Sciatic nerve (tissue), 2 donors: ENCODE measurements at regions of chr20 and their contacts with region 1.

Region 1: GRCh38 chr20:60281295-60281694 is 323.1 kb downstream of the CDH26 start:
- DNase-seq: no peak
- ATAC-seq: no peak

Region 2: DNA sequence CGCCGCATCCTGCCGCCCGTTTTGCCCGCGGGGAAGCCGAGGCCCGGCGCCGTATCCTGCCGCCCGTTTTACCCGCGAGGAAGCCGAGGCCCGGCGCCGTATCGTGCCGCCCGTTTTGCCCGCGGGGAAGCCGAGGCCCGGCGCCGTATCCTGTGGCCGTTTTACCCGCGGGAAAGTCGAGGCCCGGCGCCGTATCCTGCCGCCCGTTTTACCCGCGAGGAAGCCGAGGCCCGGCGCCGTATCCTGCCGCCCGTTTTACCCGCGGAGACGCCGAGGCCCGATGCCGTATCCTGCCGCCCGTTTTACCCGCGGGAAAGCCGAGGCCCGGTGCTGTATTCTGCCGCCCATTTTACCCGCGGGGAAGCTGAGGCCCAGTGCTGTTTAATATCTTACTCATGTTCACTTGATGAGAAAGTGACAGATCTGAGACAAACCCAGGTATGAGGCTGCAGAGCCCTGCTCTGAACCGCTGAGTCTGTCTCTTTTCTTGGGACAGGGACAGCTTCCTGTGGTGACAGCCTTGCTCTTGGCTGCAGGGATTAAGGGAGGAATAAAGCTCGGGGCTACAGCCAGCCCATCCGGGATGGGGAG is 193.6 kb before region 1 on chr20:
- intact Hi-C with region 1: no loop called
- DNase-seq: no peak
- ATAC-seq: no peak

Region 3: GRCh38 chr20:60210779-60211617 is 70.3 kb before region 1 on chr20:
- intact Hi-C with region 1: no loop called
- DNase-seq: peak; percentile 87
- ATAC-seq: peak; percentile 94

Region 4: DNA sequence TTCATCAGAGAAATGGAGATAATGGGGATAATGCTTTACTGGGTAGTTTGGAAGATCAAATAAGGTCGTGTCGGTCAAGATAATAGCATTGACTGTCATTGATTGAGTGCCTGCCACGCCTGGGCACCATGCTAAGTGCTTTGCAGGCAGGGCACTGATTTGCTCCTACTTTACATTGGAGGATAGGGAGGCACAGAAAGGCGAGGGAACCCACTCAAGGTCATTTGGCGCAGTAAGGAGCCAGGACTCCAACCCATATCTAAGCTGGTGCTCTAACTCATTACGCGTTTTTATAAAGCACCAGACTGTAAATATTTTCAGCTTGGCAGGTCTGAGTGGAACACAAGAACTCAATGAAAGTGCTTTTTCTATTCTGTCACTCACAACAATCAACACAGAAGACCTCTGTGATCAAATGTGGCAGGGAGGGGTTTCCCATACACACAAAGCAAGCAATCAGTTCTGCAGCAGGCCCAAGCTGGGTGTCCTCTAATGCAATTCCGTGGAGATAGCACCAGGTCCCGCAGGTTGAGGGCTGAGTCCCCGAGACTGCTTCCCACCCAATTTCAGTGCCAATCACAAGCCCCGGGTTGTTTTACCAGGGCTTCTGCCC is 50.5 kb after region 1 on chr20:
- intact Hi-C with region 1: no loop called
- DNase-seq: no peak
- ATAC-seq: no peak

Region 5: DNA sequence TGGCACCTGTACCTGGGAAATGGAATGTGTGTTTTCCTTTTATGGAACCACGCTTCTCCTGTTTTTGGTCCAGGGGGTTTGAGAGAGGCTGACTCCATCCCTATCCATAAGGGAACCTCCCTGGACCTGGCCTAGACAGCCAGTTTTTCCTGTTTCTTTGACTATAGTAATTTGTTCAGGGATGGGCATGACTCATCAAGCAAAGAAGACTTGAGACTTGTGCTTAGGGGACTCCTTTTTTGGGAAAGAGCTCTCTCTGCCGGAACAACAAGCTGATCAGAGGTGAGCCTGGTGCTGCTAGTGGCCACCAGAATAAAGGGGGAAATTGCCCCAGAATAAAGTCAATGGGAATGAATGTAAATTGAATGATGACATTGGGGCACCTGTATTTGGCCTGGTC is 70.8 kb after region 1 on chr20:
- intact Hi-C with region 1: loop called (anchors 1 kb)
- DNase-seq: no peak
- ATAC-seq: no peak